ENCODE measurements at regions of chr4 and their contacts with region 1.

Region 1: DNA sequence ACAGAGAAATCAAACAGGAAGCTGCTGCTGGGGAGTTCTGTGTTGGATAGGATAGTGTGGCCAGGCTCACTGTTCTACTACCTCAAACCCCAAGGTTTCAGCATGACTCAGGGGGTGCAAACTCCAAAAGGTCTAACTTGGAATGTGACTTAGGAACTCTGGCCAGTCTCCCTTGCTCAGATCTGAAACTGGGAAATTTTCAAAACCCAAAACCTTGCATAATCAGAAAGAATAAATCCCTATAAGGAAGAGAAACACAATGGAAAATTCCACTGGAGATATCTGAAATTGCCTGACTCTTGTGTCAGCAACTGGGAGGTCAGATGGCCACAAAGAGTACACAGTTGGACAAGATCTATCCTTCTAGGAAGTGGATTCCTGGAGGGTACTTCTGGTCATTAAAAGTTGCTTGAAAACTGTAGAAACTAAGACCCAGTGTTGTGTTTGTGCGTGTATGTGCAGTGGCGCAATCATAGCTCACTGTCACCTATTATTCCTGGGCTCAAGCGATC is 58.0 kb downstream of the PPEF2 start:
- DNase-seq: no peak
- H3K4me3 Mint-ChIP-seq: no peak overlapping the region
- H3K27ac Mint-ChIP-seq: no peak overlapping the region
- H3K4me1 Mint-ChIP-seq: peaks cover 12% of the 10 kb centered on the region
- H3K27me3 Mint-ChIP-seq: no peaks in the 10 kb centered on the region

Region 2: DNA sequence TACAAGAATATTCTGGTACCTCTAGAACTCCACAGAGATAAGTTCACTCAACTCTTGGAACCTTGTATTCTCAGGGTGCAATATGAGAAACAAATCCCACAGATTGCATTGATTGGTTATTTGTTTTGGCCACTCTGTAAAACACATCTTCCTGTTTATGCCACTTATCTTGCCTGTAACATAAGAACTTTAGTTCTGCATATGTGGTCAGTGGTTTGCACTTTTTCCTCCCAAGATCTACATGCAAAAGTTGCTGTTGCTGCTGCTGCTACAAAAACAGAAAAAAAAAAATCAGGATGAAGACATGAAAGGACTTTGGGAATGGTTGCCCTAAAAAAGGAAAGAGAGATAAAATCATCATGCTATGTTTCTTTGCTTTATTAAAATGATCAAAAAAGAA is 278.7 kb before region 1 on chr4:
- CTCF ChIA-PET with region 1: interaction called, 21 read pairs
- POLR2A ChIA-PET with region 1: no interaction called
- DNase-seq: no peak
- H3K4me3 Mint-ChIP-seq: no peak overlapping the region
- H3K27ac Mint-ChIP-seq: no peak overlapping the region
- H3K4me1 Mint-ChIP-seq: peaks cover 20% of the 10 kb centered on the region
- H3K27me3 Mint-ChIP-seq: peaks cover 15% of the 10 kb centered on the region

Region 3: GRCh38 chr4:75869100-75869499 is 24.9 kb after region 1 on chr4:
- CTCF ChIA-PET with region 1: interaction called, 10 read pairs
- POLR2A ChIA-PET with region 1: no interaction called
- DNase-seq: no peak
- H3K4me3 Mint-ChIP-seq: no peak overlapping the region
- H3K27ac Mint-ChIP-seq: no peak overlapping the region
- H3K4me1 Mint-ChIP-seq: no peaks in the 10 kb centered on the region
- H3K27me3 Mint-ChIP-seq: no peaks in the 10 kb centered on the region

Region 4: DNA sequence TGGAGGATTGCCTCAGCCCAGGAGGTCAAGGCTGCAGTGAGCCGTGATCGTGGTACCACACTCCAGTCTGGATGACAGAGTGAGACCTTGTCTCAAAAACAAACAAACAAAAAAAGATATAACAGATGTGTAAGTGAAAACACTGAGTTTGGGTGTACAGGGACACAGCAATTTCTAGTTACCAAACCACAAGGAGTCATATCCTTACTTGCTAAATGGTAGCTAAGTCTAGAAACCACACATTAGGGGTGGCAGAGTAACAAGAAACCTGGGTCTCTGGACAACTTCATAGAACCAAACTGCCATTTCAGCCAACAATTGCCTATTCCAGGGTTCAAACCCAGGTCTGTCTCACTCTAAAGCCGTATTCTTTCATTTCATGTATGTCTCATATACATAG is 37.3 kb after region 1 on chr4:
- CTCF ChIA-PET with region 1: no interaction called
- POLR2A ChIA-PET with region 1: no interaction called
- DNase-seq: no peak
- H3K4me3 Mint-ChIP-seq: no peak overlapping the region
- H3K27ac Mint-ChIP-seq: no peak overlapping the region
- H3K4me1 Mint-ChIP-seq: peaks cover 6% of the 10 kb centered on the region
- H3K27me3 Mint-ChIP-seq: peaks cover 14% of the 10 kb centered on the region

Region 5: DNA sequence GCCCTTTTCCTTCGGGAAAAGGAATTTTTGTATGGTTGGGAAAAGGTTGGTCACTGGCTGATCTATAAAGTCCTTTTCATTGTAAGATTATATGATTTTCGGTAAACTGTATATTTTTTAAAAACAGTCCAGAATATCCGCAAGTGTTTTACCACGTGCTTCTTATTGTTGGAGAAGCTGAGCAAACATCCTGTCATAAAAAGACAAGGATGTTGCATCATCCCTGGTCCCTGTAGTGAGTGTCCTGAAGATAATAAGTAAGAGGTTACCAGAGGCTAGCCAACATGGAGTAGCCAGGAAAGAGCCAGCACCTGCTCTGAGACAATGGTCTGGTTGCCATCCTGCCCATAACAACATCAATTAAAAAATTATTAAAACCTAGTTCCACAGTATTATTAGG is 158.0 kb after region 1 on chr4:
- CTCF ChIA-PET with region 1: no interaction called
- POLR2A ChIA-PET with region 1: no interaction called
- DNase-seq: no peak
- H3K4me3 Mint-ChIP-seq: no peak overlapping the region
- H3K27ac Mint-ChIP-seq: no peak overlapping the region
- H3K4me1 Mint-ChIP-seq: peaks cover 7% of the 10 kb centered on the region
- H3K27me3 Mint-ChIP-seq: peaks cover 3% of the 10 kb centered on the region

Region 6: GRCh38 chr4:76028350-76028765 is 184.2 kb after region 1 on chr4:
- CTCF ChIA-PET with region 1: no interaction called
- POLR2A ChIA-PET with region 1: no interaction called
- DNase-seq: no peak
- H3K4me3 Mint-ChIP-seq: peak overlapping the region; percentile 42
- H3K27ac Mint-ChIP-seq: no peak overlapping the region
- H3K4me1 Mint-ChIP-seq: peaks cover 26% of the 10 kb centered on the region
- H3K27me3 Mint-ChIP-seq: peaks cover 7% of the 10 kb centered on the region

Region 7: GRCh38 chr4:76074468-76074867 is 230.3 kb after region 1 on chr4 and contains the start of gene ART3:
- CTCF ChIA-PET with region 1: no interaction called
- POLR2A ChIA-PET with region 1: no interaction called
- DNase-seq: no peak
- H3K4me3 Mint-ChIP-seq: no peak within 1 kb of the TSS
- H3K27ac Mint-ChIP-seq: no peak within 1 kb of the TSS
- H3K4me1 Mint-ChIP-seq: peaks cover 1% of the 10 kb centered on the region
- H3K27me3 Mint-ChIP-seq: peaks cover 3% of the 10 kb centered on the region
- total RNA-seq, gene ART3: 0.30 to 0.95 TPM